ENCODE measurements at regions of chr12 and their contacts with region 1.

Region 1: GRCh38 chr12:452667-453210 is 7.0 kb upstream of the B4GALNT3 start:
- DNase-seq: peak; percentile 85
- H3K4me3 Mint-ChIP-seq: no peak overlapping the region
- H3K27ac Mint-ChIP-seq: no peak overlapping the region
- H3K4me1 Mint-ChIP-seq: peaks cover 6% of the 10 kb centered on the region
- H3K27me3 Mint-ChIP-seq: no peaks in the 10 kb centered on the region

Region 2: DNA sequence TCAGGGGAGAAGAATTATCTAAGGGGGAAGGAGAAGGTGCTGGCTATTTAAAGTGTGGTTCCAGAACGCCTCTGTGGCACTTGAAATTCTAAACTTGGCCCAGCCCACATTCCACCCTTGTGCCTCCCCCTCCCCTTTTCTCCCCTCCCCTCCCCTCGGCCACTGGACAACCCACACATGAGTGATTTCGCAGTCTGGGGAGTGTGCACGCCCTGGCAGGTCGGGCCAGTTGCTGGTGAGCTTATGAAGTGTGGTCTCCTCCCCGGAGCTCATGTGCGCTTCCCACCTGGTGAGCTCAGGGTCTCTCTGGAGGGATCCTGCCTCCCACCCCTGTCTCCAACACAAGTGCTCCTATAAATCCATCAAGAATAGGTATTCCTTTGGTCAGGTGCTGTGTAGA is 189.9 kb before region 1 on chr12 and contains the start of gene SLC6A13:
- CTCF ChIA-PET with region 1: no interaction called
- POLR2A ChIA-PET with region 1: no interaction called
- intact Hi-C with region 1: no loop called
- DNase-seq: no peak
- H3K4me3 Mint-ChIP-seq: no peak within 1 kb of the TSS
- H3K27ac Mint-ChIP-seq: no peak within 1 kb of the TSS
- H3K4me1 Mint-ChIP-seq: no peaks in the 10 kb centered on the region
- H3K27me3 Mint-ChIP-seq: peaks cover 19% of the 10 kb centered on the region
- total RNA-seq, gene SLC6A13: 0.39 TPM in 1 of 2 experiments, not detected in the other

Region 3: DNA sequence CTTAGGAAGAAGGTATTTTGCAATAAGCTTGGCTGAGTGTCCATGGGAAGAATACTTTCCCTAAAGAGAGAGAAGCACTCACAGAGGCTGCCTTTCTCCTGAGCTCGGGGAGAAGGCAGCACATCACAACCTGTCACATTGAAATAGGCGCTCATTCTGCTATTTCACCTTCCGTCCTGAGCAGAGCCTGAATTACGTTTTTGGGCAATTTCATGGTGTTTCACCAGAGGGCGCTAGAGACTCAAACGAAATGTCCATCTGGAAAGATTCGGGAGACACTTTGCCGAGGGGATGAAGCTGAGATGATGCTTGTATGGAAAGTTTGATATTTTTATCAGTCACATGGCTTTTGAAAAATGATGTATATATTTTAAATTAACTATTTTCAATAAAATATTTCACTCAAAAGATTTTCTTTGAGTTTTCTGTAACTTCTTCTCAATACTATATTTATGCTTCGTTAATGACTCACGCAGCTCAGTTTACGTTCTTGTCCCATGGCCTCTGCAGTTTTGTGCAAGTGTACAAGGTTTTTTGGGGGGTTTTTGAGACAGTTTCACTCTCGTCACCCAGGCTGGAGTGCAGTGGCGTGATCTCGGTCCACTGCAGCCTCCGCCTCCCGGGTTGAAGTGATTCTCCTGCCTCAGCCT is 10.4 kb before region 1 on chr12:
- CTCF ChIA-PET with region 1: interaction called, 42 read pairs
- POLR2A ChIA-PET with region 1: no interaction called
- intact Hi-C with region 1: no loop called
- DNase-seq: peak; percentile 51
- H3K4me3 Mint-ChIP-seq: no peak overlapping the region
- H3K27ac Mint-ChIP-seq: no peak overlapping the region
- H3K4me1 Mint-ChIP-seq: no peaks in the 10 kb centered on the region
- H3K27me3 Mint-ChIP-seq: no peaks in the 10 kb centered on the region

Region 4: GRCh38 chr12:464484-465267 is 11.9 kb after region 1 on chr12:
- CTCF ChIA-PET with region 1: interaction called, 24 read pairs
- POLR2A ChIA-PET with region 1: no interaction called
- intact Hi-C with region 1: no loop called
- DNase-seq: no peak
- H3K4me3 Mint-ChIP-seq: no peak overlapping the region
- H3K27ac Mint-ChIP-seq: no peak overlapping the region
- H3K4me1 Mint-ChIP-seq: peaks cover 4% of the 10 kb centered on the region
- H3K27me3 Mint-ChIP-seq: peaks cover 17% of the 10 kb centered on the region

Region 5: DNA sequence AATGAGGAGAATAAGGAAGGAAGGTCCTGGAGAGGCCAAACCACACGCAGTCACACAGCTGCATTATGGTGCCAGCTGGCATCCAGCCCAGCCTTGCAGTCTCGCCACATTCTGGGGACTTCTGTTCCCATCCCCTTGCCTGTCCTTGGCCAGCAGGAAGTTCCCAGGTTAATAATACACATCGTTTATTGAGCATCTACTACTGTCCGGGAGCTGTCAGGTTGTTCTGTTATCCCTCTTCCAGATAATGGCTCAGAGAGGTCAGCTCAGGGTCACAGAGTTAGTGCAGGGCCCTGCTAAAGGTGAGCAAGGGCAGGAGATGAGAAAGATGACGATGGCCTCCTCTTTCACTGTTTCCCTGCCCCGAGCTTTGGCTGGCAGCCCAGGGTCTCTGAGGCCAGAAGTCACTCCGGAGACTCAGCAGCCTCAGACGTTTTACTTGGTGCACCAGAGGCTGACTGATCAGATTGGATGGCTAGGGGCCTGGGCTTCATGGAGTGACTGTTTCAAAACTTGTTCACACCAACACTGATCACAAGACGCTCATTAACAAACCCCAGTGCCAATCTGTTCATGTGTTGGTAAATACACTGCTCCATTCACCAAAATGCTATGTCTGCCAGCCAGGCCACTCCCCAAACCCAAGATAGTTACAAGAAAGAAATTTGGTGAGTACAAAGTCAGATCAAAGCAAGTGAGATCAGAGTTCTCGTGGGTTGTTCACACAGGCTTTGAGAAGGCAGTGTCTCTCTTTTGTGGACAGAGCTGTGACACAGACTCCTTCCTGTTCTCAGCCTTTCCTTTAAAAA is 86.2 kb after region 1 on chr12:
- CTCF ChIA-PET with region 1: interaction called, 53 read pairs
- POLR2A ChIA-PET with region 1: no interaction called
- intact Hi-C with region 1: no loop called
- DNase-seq: peak; percentile 33
- H3K4me3 Mint-ChIP-seq: no peak overlapping the region
- H3K27ac Mint-ChIP-seq: peak overlapping the region; percentile 36
- H3K4me1 Mint-ChIP-seq: peaks cover 20% of the 10 kb centered on the region
- H3K27me3 Mint-ChIP-seq: no peaks in the 10 kb centered on the region

Region 6: GRCh38 chr12:546921-547845 is 94.4 kb after region 1 on chr12:
- CTCF ChIA-PET with region 1: interaction called, 136 read pairs
- POLR2A ChIA-PET with region 1: no interaction called
- intact Hi-C with region 1: loop called (anchors 1 kb)
- DNase-seq: peak; percentile 80
- H3K4me3 Mint-ChIP-seq: no peak overlapping the region
- H3K27ac Mint-ChIP-seq: no peak overlapping the region
- H3K4me1 Mint-ChIP-seq: peaks cover 10% of the 10 kb centered on the region
- H3K27me3 Mint-ChIP-seq: peaks cover 10% of the 10 kb centered on the region

Region 7: GRCh38 chr12:553205-554000 is 100.7 kb after region 1 on chr12:
- CTCF ChIA-PET with region 1: interaction called, 136 read pairs
- POLR2A ChIA-PET with region 1: no interaction called
- intact Hi-C with region 1: no loop called
- DNase-seq: peak; percentile 48
- H3K4me3 Mint-ChIP-seq: no peak overlapping the region
- H3K27ac Mint-ChIP-seq: no peak overlapping the region
- H3K4me1 Mint-ChIP-seq: peaks cover 26% of the 10 kb centered on the region
- H3K27me3 Mint-ChIP-seq: no peaks in the 10 kb centered on the region

Region 8: DNA sequence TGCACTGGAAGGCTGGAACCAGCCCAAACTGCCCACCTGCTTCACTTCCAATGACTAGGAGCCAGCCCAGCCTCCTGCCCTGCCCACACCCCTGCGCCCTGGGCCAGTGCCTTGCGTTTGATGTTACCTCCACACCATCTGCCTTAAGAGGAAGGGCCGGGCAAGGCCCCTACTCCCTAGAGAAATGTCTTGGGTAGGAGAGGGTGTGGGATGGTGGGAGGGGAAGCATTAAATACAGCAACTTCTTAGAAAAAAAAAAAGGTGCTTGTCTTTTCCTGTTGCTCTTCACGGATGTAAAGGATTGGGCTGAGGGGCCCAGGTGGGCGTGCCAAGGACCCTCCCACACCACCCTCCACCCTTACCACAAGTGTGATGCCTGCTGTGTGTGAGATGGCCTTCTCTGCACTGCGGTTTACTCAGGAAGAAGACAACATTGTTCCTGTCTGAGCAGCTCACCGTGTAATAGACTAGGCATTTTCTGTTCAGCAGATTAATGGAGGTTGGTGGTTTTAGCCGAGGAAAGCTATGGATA is 110.6 kb after region 1 on chr12:
- CTCF ChIA-PET with region 1: interaction called, 19 read pairs
- POLR2A ChIA-PET with region 1: no interaction called
- intact Hi-C with region 1: no loop called
- DNase-seq: peak; percentile 71
- H3K4me3 Mint-ChIP-seq: peak overlapping the region; percentile 43
- H3K27ac Mint-ChIP-seq: peak overlapping the region; percentile 64
- H3K4me1 Mint-ChIP-seq: peaks cover 51% of the 10 kb centered on the region
- H3K27me3 Mint-ChIP-seq: no peaks in the 10 kb centered on the region

Measured in activated CD4-positive, alpha-beta memory T cell treated with anti-CD3 and anti-CD28 coated beads for 36 hours (primary cell).